AG04450 (cell line): ENCODE measurements at regions of chr11 and their contacts with region 1.

Region 1: GRCh38 chr11:123511037-123511870 is 81.2 kb downstream of the GRAMD1B start:
- DNase-seq: peak; percentile 80
- H3K4me3 ChIP-seq: no peak overlapping the region
- H3K27ac ChIP-seq: no peak overlapping the region
- H3K27me3 ChIP-seq: no peaks in the 10 kb centered on the region
- CTCF ChIP-seq: peak; percentile 88

Region 2: DNA sequence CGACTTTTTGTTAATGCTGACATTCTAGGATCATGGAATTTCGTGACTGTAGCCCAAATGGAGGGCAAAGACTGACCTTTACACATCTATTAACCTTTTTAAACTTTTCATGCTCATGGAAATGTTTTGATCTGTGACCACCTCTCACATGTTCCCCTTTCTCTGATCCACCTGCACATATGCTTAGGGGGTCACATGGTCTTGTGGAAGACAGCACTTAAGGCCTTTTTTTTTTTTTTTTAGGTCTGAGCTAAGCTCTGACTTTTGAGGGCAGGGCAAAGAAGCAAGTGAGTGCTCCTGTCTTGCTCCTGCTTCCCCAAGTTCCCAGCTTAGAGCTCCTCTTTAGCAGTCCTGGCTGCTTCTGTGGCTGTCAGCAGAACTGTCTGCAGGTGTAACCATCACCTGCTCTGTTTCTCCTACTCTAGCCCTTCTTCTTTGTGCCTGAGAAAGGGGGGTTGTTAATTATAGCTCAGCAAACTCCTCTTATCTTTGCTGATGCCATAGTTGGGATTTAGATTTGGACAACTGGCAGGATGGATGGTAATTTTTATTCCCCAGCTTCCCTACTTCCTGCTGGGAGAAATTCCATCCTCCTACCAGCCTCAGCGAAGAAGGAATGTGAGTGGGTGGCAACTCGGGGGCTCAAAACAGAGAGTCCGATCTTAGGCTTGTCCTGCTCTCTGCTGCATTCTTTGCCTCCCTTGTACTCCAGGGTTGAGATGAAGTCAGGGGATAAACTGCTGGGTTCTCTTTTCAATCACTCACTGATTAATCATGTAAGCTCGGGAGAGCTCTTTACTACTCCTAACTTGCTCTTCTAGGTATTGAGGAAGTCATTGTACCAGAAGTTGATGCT is 16.8 kb before region 1 on chr11:
- CTCF ChIA-PET with region 1: interaction called, 14 read pairs
- POLR2A ChIA-PET with region 1: interaction called, 3 read pairs
- DNase-seq: peak; percentile 20
- H3K4me3 ChIP-seq: no peak overlapping the region
- H3K27ac ChIP-seq: no peak overlapping the region
- H3K27me3 ChIP-seq: no peaks in the 10 kb centered on the region
- CTCF ChIP-seq: no peak

Region 3: GRCh38 chr11:123547180-123547579 is 35.9 kb after region 1 on chr11:
- CTCF ChIA-PET with region 1: interaction called, 12 read pairs
- POLR2A ChIA-PET with region 1: no interaction called
- DNase-seq: no peak
- H3K4me3 ChIP-seq: no peak overlapping the region
- H3K27ac ChIP-seq: no peak overlapping the region
- H3K27me3 ChIP-seq: no peaks in the 10 kb centered on the region
- CTCF ChIP-seq: no peak

Region 4: DNA sequence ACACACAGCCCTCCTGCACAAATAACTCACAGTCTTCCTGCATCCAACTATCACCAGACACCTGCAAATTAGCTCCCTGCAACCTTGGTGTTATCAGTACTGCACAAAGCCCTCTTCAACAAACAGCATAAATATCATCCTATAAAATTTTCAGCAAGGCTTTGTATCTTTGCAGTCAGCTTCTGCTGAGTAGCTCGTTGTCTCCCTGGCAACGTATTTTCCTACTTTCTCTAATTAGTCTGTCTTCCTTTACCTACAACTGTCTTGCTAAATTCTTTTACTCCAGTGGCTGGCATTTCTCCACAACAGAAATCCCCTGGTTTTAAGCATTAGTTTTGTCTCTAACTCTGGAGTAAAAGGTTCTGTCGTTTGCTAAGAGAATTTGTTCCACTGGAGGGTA is 394.6 kb after region 1 on chr11:
- CTCF ChIA-PET with region 1: no interaction called
- POLR2A ChIA-PET with region 1: no interaction called
- DNase-seq: no peak
- H3K4me3 ChIP-seq: no peak overlapping the region
- H3K27ac ChIP-seq: no peak overlapping the region
- H3K27me3 ChIP-seq: peaks cover 2% of the 10 kb centered on the region
- CTCF ChIP-seq: no peak